Caco-2 (cell line): ENCODE measurements at regions of chr2 and their contacts with region 1.

Region 1: DNA sequence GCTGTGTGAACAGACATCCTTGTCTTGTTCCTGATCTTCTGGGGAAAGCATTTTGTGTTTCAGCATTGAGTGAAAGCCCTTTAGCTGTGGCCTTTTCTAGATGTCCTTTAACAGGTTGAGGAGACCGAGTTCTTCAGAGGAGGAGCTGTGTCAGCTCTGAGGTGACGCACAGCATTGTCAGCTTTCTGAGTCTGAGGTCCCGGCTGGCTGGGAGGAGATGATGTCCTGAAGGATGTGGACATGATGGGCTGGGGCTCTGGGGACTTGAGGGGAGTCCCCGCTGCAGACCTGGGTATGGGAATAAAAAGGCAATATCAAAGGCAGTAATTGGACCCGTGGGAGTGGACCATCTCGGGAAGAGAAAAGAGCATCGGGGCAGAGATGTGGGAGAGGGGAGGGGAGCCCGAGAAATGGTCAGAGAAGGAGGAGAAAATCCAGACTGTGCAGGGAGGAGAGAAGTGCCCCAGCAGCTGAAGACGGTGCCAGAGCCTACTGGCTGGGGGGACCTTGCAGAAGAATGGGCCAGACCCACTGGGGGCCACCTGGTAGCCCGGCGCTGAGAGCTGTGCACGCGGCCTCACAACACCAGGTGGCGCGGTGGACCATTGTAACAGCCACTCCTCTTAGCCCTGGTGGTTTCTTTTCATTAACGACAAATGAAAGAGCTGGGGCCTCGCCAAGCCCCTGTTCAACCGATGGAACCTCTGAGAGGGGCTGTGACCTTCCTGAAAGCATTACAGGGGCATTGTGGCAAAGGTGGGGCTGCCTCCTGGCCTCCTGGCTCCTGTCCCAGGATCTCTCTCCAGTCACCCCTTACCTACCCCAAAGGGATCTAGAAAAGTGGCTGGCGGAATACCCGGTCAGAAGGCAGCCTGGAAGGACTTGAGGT is 61.6 kb downstream of the ST3GAL5 start:
- DNase-seq: peak; percentile 64 to 82
- H3K4me3 ChIP-seq: no peak overlapping the region
- H3K4me3 Mint-ChIP-seq: peak overlapping the region; percentile 3
- H3K27ac Mint-ChIP-seq: no peak overlapping the region
- H3K4me1 ChIP-seq: no peaks in the 10 kb centered on the region
- H3K4me1 Mint-ChIP-seq: peaks cover 5% of the 10 kb centered on the region
- H3K27me3 ChIP-seq: no peaks in the 10 kb centered on the region
- H3K27me3 Mint-ChIP-seq: peaks cover 3% of the 10 kb centered on the region
- CTCF ChIP-seq: peak; percentile 87 to 91

Region 2: GRCh38 chr2:85577386-85578242 is 249.6 kb before region 1 on chr2 and contains the start of gene VAMP8:
- CTCF ChIA-PET with region 1: no interaction called
- POLR2A ChIA-PET with region 1: no interaction called
- intact Hi-C with region 1: no loop called
- DNase-seq: peak; percentile 87 to 89
- H3K4me3 ChIP-seq: peak within 1 kb of the TSS; percentile 67
- H3K4me3 Mint-ChIP-seq: peak within 1 kb of the TSS; percentile 90
- H3K27ac Mint-ChIP-seq: peak within 1 kb of the TSS; percentile 93
- H3K4me1 ChIP-seq: peaks cover 14% of the 10 kb centered on the region
- H3K4me1 Mint-ChIP-seq: peaks cover 17% of the 10 kb centered on the region
- H3K27me3 ChIP-seq: no peaks in the 10 kb centered on the region
- H3K27me3 Mint-ChIP-seq: no peaks in the 10 kb centered on the region
- CTCF ChIP-seq: no peak
- total RNA-seq, gene VAMP8: 82.9 and 85.5 TPM in 2 replicates

Region 3: GRCh38 chr2:85986121-85986520 is 158.9 kb after region 1 on chr2:
- CTCF ChIA-PET with region 1: no interaction called
- POLR2A ChIA-PET with region 1: no interaction called
- intact Hi-C with region 1: no loop called
- DNase-seq: no peak
- H3K4me3 ChIP-seq: no peak overlapping the region
- H3K4me3 Mint-ChIP-seq: no peak overlapping the region
- H3K27ac Mint-ChIP-seq: no peak overlapping the region
- H3K4me1 ChIP-seq: no peaks in the 10 kb centered on the region
- H3K4me1 Mint-ChIP-seq: no peaks in the 10 kb centered on the region
- H3K27me3 ChIP-seq: no peaks in the 10 kb centered on the region
- H3K27me3 Mint-ChIP-seq: no peaks in the 10 kb centered on the region
- CTCF ChIP-seq: no peak

Region 4: DNA sequence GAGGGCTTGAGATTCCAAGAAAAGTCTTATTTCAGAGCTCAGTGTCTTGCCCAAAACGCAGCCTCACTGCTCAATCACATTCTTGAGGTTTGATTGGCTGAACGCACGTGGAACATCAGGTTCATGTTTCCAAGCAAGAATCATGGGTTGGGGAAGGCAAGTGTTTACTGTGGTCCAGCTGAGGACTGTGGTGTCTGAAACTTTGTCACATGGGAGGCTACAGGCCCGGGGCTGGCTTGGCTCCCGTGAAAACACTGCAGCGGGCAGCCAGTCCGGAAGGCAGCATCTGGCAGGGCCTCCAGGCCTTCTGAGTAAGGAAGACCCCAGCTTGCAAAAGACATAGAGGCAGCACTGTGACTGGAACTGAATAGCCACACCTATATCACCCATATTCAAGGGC is 193.8 kb after region 1 on chr2:
- CTCF ChIA-PET with region 1: interaction called, 9 read pairs
- POLR2A ChIA-PET with region 1: no interaction called
- intact Hi-C with region 1: loop called (anchors 5 kb)
- DNase-seq: no peak
- H3K4me3 ChIP-seq: no peak overlapping the region
- H3K4me3 Mint-ChIP-seq: no peak overlapping the region
- H3K27ac Mint-ChIP-seq: no peak overlapping the region
- H3K4me1 ChIP-seq: peaks cover 7% of the 10 kb centered on the region; the same call in 1 of the 2 replicates
- H3K4me1 Mint-ChIP-seq: peaks cover 7% of the 10 kb centered on the region
- H3K27me3 ChIP-seq: no peaks in the 10 kb centered on the region
- H3K27me3 Mint-ChIP-seq: no peaks in the 10 kb centered on the region
- CTCF ChIP-seq: no peak

Region 5: GRCh38 chr2:86079981-86080911 is 253.0 kb after region 1 on chr2:
- CTCF ChIA-PET with region 1: interaction called, 27 read pairs
- POLR2A ChIA-PET with region 1: no interaction called
- intact Hi-C with region 1: loop called (anchors 1 kb)
- DNase-seq: peak; percentile 82 to 85
- H3K4me3 ChIP-seq: no peak overlapping the region
- H3K4me3 Mint-ChIP-seq: no peak overlapping the region
- H3K27ac Mint-ChIP-seq: no peak overlapping the region
- H3K4me1 ChIP-seq: no peaks in the 10 kb centered on the region; the same call in 1 of the 2 replicates
- H3K4me1 Mint-ChIP-seq: no peaks in the 10 kb centered on the region
- H3K27me3 ChIP-seq: no peaks in the 10 kb centered on the region
- H3K27me3 Mint-ChIP-seq: no peaks in the 10 kb centered on the region
- CTCF ChIP-seq: peak; percentile 61 to 90

Region 6: GRCh38 chr2:86157009-86157556 is 329.8 kb after region 1 on chr2:
- CTCF ChIA-PET with region 1: no interaction called
- POLR2A ChIA-PET with region 1: no interaction called
- intact Hi-C with region 1: loop called (anchors 5 kb)
- DNase-seq: peak; percentile 49 to 51
- H3K4me3 ChIP-seq: no peak overlapping the region
- H3K4me3 Mint-ChIP-seq: no peak overlapping the region
- H3K27ac Mint-ChIP-seq: no peak overlapping the region
- H3K4me1 ChIP-seq: no peaks in the 10 kb centered on the region
- H3K4me1 Mint-ChIP-seq: peaks cover 6% of the 10 kb centered on the region
- H3K27me3 ChIP-seq: no peaks in the 10 kb centered on the region
- H3K27me3 Mint-ChIP-seq: no peaks in the 10 kb centered on the region
- CTCF ChIP-seq: no peak